ENCODE measurements at regions of chr10 and their contacts with region 1.

Region 1: GRCh38 chr10:119859420-119860258 is 13.0 kb downstream of the MCMBP start:
- DNase-seq: peak; percentile 15
- H3K4me3 ChIP-seq: peak overlapping the region in 1 of 2 experiments; percentile 3; a peak in 1 of 4 replicates
- H3K27ac ChIP-seq: peak overlapping the region in 1 of 2 experiments; percentile 6; a peak in 1 of 4 replicates
- H3K4me1 ChIP-seq: peaks cover 0 to 5% of the 10 kb centered on the region in 2 experiments; a peak in 1 of 4 replicates
- H3K27me3 ChIP-seq: no peaks in the 10 kb centered on the region
- CTCF ChIP-seq: peak; percentile 78
- EP300 ChIP-seq: no peak
- RAD21 ChIP-seq: peak; percentile 72

Region 2: DNA sequence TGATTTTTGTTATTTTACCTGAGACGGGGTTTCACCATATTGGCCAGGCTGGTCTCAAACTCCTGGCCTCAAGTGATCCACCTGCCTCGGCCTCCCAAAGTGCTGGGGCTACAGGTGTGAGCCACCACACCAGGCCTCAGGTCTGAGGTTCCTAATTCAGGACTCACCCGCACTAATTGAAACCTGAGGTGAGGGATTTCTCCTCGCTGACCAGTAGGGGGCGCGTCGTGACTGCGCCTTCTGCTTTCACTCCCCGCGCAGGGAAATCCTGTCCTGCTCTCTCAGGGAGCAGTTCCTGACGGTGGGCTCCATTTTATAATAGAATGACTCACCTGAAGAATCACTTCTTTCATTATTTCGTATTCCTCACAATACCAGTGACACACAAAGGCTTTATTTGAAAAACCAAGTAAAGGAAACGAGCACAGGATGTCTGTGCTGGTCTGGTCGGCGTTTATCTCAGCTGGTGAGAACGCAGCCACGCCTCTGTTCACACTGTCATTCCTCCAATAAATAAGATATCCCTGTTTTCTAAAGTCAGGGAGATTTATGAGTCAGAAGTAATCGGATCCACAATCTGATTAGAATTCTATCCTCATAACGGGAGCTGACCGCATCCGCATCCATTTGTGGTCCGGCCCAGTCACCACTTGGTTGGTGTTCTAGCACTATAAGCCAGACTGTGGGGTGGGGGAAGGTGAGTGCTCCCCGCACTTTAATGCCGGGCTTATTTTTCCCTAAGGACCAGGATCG is 173.0 kb before region 1 on chr10:
- CTCF ChIA-PET with region 1: interaction called, 24 read pairs
- POLR2A ChIA-PET with region 1: no interaction called
- DNase-seq: peak; percentile 81
- H3K4me3 ChIP-seq: peak overlapping the region; percentile 27 to 36; a peak in 3 of 4 replicates
- H3K27ac ChIP-seq: peak overlapping the region in 1 of 2 experiments; percentile 87; a peak in 2 of 4 replicates
- H3K4me1 ChIP-seq: peaks cover 0 to 11% of the 10 kb centered on the region in 2 experiments; a peak in 1 of 4 replicates
- H3K27me3 ChIP-seq: no peaks in the 10 kb centered on the region
- CTCF ChIP-seq: peak; percentile 97
- EP300 ChIP-seq: peak; percentile 7 to 63; a peak in 1 of 4 replicates
- RAD21 ChIP-seq: peak; percentile 88

Region 3: GRCh38 chr10:119821182-119821581 is 38.5 kb before region 1 on chr10:
- CTCF ChIA-PET with region 1: interaction called, 12 read pairs
- POLR2A ChIA-PET with region 1: no interaction called
- DNase-seq: no peak
- H3K4me3 ChIP-seq: no peak overlapping the region
- H3K27ac ChIP-seq: no peak overlapping the region
- H3K4me1 ChIP-seq: no peaks in the 10 kb centered on the region
- H3K27me3 ChIP-seq: no peaks in the 10 kb centered on the region
- CTCF ChIP-seq: no peak
- EP300 ChIP-seq: no peak
- RAD21 ChIP-seq: no peak

Region 4: DNA sequence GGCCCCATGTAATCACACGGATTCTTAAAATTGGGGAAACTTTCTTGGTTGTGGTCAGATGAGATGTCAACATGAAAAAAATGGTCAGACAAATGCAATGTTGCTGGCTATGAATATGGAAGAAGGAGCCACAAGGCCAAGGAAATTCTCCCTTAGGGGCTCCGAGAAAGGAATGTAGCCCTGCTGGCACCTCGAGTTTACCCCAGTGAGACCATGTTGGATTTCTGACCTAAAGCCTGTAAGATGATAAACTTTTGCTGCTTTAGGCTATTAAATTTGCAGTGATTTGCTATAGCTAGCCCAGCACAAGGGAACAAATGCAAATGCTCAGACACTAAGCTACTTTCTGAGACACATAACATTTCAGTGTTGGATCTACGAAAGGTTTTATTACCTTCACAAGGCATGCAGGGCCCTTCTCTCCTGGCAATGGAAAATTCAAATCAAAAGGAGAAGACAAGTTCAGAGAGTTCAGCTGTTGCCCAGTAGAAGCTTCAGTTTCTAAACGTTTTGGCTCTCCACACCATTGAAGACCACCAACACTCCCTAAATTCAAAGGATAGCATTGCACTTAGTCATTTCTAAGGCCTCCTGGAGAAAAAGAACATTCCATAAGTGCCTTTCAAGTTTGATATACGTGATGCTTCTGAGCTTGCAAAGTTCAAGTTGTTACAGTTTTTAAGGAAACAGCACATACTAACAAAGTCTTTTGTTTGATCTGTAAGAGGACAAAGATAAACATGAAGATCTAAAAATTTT is 10.4 kb before region 1 on chr10:
- CTCF ChIA-PET with region 1: interaction called, 19 read pairs
- POLR2A ChIA-PET with region 1: no interaction called
- DNase-seq: no peak
- H3K4me3 ChIP-seq: no peak overlapping the region
- H3K27ac ChIP-seq: peak overlapping the region; percentile 47 to 53; a peak in 3 of 4 replicates
- H3K4me1 ChIP-seq: peaks cover 2 to 18% of the 10 kb centered on the region in 2 experiments; a peak in 1 of 4 replicates
- H3K27me3 ChIP-seq: no peaks in the 10 kb centered on the region
- CTCF ChIP-seq: no peak
- EP300 ChIP-seq: no peak
- RAD21 ChIP-seq: no peak